ENCODE measurements at regions of chr5 and their contacts with region 1.

Region 1: DNA sequence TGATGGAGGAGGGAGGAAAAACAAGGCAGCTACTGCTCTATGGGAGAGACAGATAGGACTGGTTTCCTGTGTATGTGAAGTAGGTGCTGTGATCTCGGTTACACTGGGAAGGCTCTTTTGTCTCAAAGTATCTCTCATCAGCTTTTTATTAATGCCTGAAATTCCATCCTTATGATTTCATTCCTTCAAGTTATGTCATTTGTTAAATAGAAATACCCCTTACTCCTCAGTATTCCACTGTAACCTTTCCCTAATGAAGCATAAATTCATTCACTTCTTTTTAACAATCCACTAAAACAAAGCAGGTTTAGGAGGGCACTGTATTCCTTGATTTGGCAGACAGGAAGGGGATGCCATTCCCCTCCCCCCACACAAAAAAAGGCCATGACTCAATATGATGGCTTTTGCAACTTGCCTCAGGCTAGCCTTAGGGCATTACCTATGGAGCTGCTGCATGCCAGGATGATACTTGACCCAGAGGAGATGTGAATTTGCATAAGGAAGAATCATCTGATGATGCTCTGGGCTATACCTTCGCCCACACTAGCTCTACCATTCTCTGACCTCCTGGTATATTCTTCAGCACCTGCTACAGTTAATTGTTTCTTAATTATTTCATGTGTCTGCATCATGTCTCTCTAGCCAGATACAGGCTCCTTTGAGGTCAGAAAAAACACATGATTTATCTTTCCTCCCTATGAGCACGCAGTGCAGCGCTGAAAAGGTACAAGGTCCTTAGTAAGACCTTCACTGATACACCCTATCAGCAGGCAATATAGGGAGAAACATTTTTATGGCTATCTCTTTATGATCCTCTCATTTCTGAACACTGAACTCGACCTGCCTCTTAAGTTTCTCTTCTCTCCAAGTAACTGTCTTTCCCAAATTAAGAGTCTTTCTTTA is 26.3 kb downstream of the NR3C1 start:
- DNase-seq: no peak
- ATAC-seq: peak; percentile 30
- H3K4me3 ChIP-seq: no peak overlapping the region
- H3K27ac ChIP-seq: no peak overlapping the region
- H3K4me1 ChIP-seq: peaks cover 9% of the 10 kb centered on the region; the same call in 1 of the 2 replicates
- H3K27me3 ChIP-seq: no peaks in the 10 kb centered on the region
- CTCF ChIP-seq: no peak
- EP300 ChIP-seq: no peak
- POLR2A ChIP-seq: peak; percentile 50; the same call in 1 of the 2 replicates
- RAD21 ChIP-seq: no peak

Region 2: DNA sequence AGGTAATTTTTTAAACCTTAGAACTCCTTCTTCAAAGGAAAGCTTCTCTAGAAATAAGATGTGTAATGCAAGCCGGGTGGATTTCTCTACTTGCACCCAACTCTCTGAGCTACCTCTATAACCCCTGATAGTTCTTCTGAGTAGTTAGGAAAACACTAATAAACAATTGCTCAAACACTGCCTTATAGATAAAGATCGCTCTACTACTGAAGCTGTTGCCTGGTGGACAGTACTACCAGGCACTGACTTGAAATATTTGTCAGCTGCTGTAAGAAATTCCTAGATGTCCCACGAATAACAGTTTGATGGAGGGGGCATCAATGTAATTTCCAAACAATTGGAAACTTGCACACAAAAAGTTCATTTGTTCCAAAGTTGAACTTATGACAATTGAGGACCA is 15.7 kb before region 1 on chr5:
- CTCF ChIA-PET with region 1: interaction called, 6 read pairs
- POLR2A ChIA-PET with region 1: interaction called, 11 read pairs
- RAD21 ChIA-PET with region 1: interaction called, 4 read pairs
- SMC1A ChIA-PET with region 1: interaction called, 12 read pairs
- in situ Hi-C with region 1: no loop called
- intact Hi-C with region 1: no loop called
- DNase-seq: no peak
- ATAC-seq: peak; percentile 33; the same call in 2 of the 3 replicates
- H3K4me3 ChIP-seq: no peak overlapping the region
- H3K27ac ChIP-seq: no peak overlapping the region
- H3K4me1 ChIP-seq: peaks cover 19% of the 10 kb centered on the region
- H3K27me3 ChIP-seq: no peaks in the 10 kb centered on the region
- CTCF ChIP-seq: no peak
- EP300 ChIP-seq: no peak
- POLR2A ChIP-seq: no peak
- RAD21 ChIP-seq: no peak